ENCODE measurements at regions of chr15 and their contacts with region 1.

Region 1: GRCh38 chr15:99704444-99704838 is 28.8 kb downstream of the LYSMD4 start:
- DNase-seq: peak in 2 of 5 donors; percentile 61 to 68
- H3K4me3 ChIP-seq: no peak overlapping the region
- H3K4me3 Mint-ChIP-seq: no peak overlapping the region
- H3K27ac ChIP-seq: no peak overlapping the region
- H3K27ac Mint-ChIP-seq: no peak overlapping the region
- H3K4me1 ChIP-seq: peaks cover 19% of the 10 kb centered on the region
- H3K4me1 Mint-ChIP-seq: peaks cover 27 to 34% (median 32%) of the 10 kb centered on the region in 3 donors
- H3K27me3 ChIP-seq: no peaks in the 10 kb centered on the region
- H3K27me3 Mint-ChIP-seq: no peaks in the 10 kb centered on the region

Region 2: GRCh38 chr15:99275525-99276128 is 428.8 kb before region 1 on chr15:
- CTCF ChIA-PET with region 1: interaction called, 52 read pairs
- POLR2A ChIA-PET with region 1: no interaction called
- DNase-seq: no peak
- H3K4me3 ChIP-seq: no peak overlapping the region
- H3K4me3 Mint-ChIP-seq: no peak overlapping the region
- H3K27ac ChIP-seq: no peak overlapping the region
- H3K27ac Mint-ChIP-seq: no peak overlapping the region
- H3K4me1 ChIP-seq: no peaks in the 10 kb centered on the region
- H3K4me1 Mint-ChIP-seq: peaks cover 12 to 19% (median 18%) of the 10 kb centered on the region in 3 donors
- H3K27me3 ChIP-seq: no peaks in the 10 kb centered on the region
- H3K27me3 Mint-ChIP-seq: no peaks in the 10 kb centered on the region

Region 3: DNA sequence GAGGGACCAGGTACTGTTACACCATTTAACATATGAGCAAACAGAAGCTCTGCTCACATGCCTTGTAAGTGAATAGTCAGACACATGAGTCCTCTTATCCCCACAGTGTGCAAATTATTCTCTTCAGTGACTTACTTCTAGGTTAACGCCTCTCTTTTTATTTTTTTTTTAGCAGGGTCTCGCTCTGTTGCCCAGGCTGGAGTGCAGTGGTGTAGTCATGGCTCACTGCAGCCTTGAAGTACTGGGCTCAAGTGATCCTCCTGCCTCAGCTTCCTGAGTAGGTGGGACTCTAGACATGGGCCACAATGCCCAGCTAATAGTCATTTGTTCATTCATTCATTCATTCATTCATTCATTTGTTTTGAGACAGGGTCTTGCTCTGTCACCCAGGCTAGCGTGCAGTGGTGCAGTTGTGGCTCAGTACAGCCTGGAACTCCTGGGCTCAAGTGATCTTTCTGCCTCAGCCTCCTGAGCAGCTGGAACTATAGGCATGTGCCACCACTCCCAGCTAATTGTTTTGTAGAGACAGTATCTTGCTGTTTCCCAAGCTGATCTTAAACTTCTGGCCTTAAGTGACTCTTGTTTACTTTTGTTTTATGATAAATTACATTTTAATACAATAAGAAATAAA is 358.5 kb before region 1 on chr15:
- CTCF ChIA-PET with region 1: interaction called, 10 read pairs
- POLR2A ChIA-PET with region 1: no interaction called
- DNase-seq: no peak
- H3K4me3 ChIP-seq: no peak overlapping the region
- H3K4me3 Mint-ChIP-seq: no peak overlapping the region
- H3K27ac ChIP-seq: no peak overlapping the region
- H3K27ac Mint-ChIP-seq: no peak overlapping the region
- H3K4me1 ChIP-seq: no peaks in the 10 kb centered on the region
- H3K4me1 Mint-ChIP-seq: no peaks in the 10 kb centered on the region
- H3K27me3 ChIP-seq: no peaks in the 10 kb centered on the region
- H3K27me3 Mint-ChIP-seq: no peaks in the 10 kb centered on the region

Region 4: DNA sequence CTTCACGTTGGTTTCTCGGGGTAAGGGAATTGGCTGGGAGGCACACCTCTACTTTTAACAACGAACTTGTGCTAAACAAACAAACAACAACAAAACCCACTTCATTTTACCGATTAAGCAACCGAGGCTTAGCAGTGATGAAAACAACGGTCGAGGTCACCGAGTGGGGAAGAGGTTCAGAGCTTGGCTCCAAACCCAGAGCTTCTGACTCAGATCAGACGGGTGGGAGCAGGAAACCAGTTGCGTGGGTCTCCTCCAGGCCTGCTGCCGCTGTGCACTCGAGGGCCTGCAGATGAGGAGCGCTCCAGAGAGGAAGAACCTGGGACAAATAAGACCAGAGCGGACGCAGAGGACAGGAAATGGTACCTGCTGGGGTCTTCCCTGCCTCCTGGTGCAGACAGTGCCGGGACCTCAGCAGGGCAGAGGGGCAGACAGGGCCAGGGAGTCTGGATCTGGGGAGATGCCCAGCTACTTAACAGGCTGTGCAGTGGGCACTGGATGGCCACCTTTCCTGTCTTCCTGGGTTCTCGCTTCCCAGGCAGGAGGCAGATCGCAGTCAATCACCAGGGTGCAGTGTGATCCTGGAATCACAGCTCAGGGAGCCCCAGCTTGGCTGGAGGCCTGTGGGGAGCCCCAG is 237.6 kb before region 1 on chr15:
- CTCF ChIA-PET with region 1: no interaction called
- POLR2A ChIA-PET with region 1: no interaction called
- DNase-seq: no peak
- H3K4me3 ChIP-seq: no peak overlapping the region
- H3K4me3 Mint-ChIP-seq: no peak overlapping the region
- H3K27ac ChIP-seq: no peak overlapping the region
- H3K27ac Mint-ChIP-seq: no peak overlapping the region
- H3K4me1 ChIP-seq: no peaks in the 10 kb centered on the region
- H3K4me1 Mint-ChIP-seq: no peaks in the 10 kb centered on the region
- H3K27me3 ChIP-seq: no peaks in the 10 kb centered on the region
- H3K27me3 Mint-ChIP-seq: peaks cover 2 to 9% of the 10 kb centered on the region in 2 donors

Region 5: GRCh38 chr15:99545605-99546004 is 158.8 kb before region 1 on chr15:
- CTCF ChIA-PET with region 1: no interaction called
- POLR2A ChIA-PET with region 1: no interaction called
- DNase-seq: no peak
- H3K4me3 ChIP-seq: no peak overlapping the region
- H3K4me3 Mint-ChIP-seq: no peak overlapping the region
- H3K27ac ChIP-seq: no peak overlapping the region
- H3K27ac Mint-ChIP-seq: no peak overlapping the region
- H3K4me1 ChIP-seq: no peaks in the 10 kb centered on the region
- H3K4me1 Mint-ChIP-seq: no peaks in the 10 kb centered on the region
- H3K27me3 ChIP-seq: no peaks in the 10 kb centered on the region
- H3K27me3 Mint-ChIP-seq: peaks cover 0 to 3% of the 10 kb centered on the region in 2 donors

Region 6: GRCh38 chr15:99717161-99718009 is 12.9 kb after region 1 on chr15:
- CTCF ChIA-PET with region 1: interaction called, 14 read pairs
- POLR2A ChIA-PET with region 1: no interaction called
- DNase-seq: no peak
- H3K4me3 ChIP-seq: no peak overlapping the region
- H3K4me3 Mint-ChIP-seq: no peak overlapping the region
- H3K27ac ChIP-seq: no peak overlapping the region
- H3K27ac Mint-ChIP-seq: no peak overlapping the region
- H3K4me1 ChIP-seq: peaks cover 25% of the 10 kb centered on the region
- H3K4me1 Mint-ChIP-seq: peaks cover 19 to 36% (median 24%) of the 10 kb centered on the region in 3 donors
- H3K27me3 ChIP-seq: no peaks in the 10 kb centered on the region
- H3K27me3 Mint-ChIP-seq: no peaks in the 10 kb centered on the region

Region 7: DNA sequence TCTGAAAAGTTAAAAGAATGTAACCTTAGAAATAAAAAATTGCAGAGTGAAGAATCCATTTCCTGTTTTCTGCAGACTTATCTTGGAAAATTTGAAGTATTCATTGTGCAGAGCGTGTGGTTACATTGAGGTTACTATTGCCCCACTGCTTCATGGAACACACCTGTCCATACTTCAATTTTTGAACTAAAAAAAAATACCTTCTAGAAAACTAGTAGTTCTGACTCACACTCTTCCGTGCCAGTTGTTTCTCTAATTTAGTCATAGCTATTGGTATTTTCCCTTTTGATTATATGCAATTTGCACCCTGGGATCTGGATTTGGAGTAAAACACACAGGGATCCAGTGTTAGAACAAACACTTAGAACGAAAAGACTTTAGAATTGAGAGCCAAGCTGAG is 140.6 kb after region 1 on chr15:
- CTCF ChIA-PET with region 1: no interaction called
- POLR2A ChIA-PET with region 1: no interaction called
- DNase-seq: no peak
- H3K4me3 ChIP-seq: no peak overlapping the region
- H3K4me3 Mint-ChIP-seq: no peak overlapping the region
- H3K27ac ChIP-seq: no peak overlapping the region
- H3K27ac Mint-ChIP-seq: no peak overlapping the region
- H3K4me1 ChIP-seq: no peaks in the 10 kb centered on the region
- H3K4me1 Mint-ChIP-seq: peaks cover 0 to 3% (median 0%) of the 10 kb centered on the region in 3 donors
- H3K27me3 ChIP-seq: no peaks in the 10 kb centered on the region
- H3K27me3 Mint-ChIP-seq: peaks cover 0 to 1% of the 10 kb centered on the region in 2 donors

Region 8: DNA sequence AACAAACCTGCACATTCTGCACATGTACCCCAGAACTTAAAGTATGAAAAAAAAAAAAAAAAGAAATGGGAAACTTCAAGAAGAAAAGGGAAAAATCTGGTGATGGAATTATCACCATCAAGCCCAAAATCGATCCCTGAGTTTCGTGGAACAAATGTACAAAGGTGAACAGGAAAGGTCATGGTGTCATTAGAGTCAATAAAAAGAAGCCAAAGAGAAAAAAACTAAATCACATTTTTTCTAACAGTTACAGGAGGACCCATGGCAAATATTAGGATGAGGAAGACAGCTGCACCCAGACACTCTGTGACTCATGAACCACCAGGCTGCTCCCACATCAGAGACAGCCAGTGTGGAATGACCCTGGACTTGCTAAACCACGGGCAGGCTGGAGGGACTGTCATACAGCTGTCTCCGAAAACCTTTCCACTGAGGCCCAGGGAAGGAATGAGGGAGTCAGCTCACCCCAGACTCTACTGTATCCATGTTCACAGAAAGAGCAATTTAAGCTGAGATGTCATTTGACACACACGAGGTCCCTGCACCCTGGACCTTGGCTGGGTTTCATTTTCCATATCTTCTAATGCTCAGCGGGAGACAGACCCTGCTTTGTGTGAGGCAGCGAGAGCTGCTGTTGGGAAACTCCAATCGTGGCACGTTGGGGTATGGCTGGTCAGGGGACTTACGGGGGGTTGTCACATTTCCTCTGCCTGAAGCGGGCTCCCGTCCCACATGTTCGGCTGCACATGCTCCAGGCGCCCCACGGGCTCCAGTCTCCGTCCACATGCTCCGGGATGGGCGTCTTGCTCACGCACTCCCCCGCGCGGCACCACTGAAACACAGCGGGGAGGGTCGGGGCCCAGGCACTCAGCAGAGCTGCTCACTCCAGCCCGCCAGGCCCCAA is 427.1 kb after region 1 on chr15:
- CTCF ChIA-PET with region 1: no interaction called
- POLR2A ChIA-PET with region 1: no interaction called
- DNase-seq: no peak
- H3K4me3 ChIP-seq: no peak overlapping the region
- H3K4me3 Mint-ChIP-seq: peak overlapping the region in 5 of 7 donors; percentile 28 to 63 (median 50)
- H3K27ac ChIP-seq: no peak overlapping the region
- H3K27ac Mint-ChIP-seq: peak overlapping the region in 1 of 8 donors; percentile 43
- H3K4me1 ChIP-seq: no peaks in the 10 kb centered on the region
- H3K4me1 Mint-ChIP-seq: peaks cover 0 to 2% (median 0%) of the 10 kb centered on the region in 3 donors
- H3K27me3 ChIP-seq: no peaks in the 10 kb centered on the region
- H3K27me3 Mint-ChIP-seq: no peaks in the 10 kb centered on the region